GM13977 (cell line): ENCODE measurements at regions of chr7 and their contacts with region 1.

Region 1: DNA sequence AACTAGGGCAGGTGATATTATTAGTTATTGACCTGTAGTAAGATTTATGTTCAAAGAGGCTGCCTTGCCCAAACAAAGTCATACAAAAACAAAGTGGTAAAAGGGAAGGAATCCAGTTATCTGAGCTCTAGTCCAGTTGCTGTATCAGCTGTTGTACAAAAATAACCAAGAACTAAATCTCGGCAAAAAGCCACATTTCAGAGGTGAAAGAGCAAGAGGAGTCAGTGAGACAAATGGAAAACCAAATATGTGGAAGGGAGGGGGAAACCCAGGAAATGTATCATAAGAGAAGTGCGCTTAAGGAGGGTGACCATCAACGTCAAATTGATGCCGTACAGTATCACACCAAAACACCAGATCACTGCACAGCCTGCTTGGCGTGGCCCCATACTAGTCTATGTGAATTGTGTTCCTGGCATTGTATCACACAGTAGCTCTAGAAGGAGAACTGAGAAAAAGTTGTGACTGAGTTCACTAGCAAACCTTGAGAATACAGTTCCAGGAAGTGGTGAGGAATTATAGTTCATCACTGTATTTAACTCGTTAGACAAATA is 6.4 kb downstream of the AGBL3 start:
- DNase-seq: peak; percentile 54
- CTCF ChIP-seq: no peak

Region 2: GRCh38 chr7:134613623-134614347 is 378.9 kb before region 1 on chr7:
- in situ Hi-C with region 1: no loop called
- DNase-seq: no peak
- CTCF ChIP-seq: no peak

Region 3: DNA sequence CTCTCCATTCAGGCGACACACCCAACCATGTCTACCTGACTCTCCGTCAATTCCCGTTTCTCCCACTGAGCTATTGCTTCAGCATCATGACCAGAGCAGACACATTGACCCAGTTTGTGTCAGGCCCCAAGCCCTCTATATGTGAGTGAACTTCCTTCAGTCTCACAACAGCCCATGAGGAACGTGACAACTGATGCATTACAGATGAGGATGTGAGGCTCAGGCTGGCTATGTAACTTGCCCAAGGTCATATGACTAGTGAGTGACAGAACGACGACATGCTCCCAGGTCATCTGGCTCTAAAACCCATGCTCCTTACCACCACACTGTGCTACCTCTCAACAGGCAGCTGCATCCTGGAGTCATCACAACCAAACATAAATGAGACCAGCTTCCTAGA is 158.8 kb after region 1 on chr7:
- in situ Hi-C with region 1: loop called (anchors 10 kb)
- DNase-seq: no peak
- CTCF ChIP-seq: no peak